Activated CD4-positive, alpha-beta memory T cell treated with anti-CD3 and anti-CD28 coated beads, Interleukin-2, amount 10 ng/mL, durations not matched to agents 7 days and 5 days (primary cell): ENCODE measurements at regions of chr11 and their contacts with region 1.

Region 1: DNA sequence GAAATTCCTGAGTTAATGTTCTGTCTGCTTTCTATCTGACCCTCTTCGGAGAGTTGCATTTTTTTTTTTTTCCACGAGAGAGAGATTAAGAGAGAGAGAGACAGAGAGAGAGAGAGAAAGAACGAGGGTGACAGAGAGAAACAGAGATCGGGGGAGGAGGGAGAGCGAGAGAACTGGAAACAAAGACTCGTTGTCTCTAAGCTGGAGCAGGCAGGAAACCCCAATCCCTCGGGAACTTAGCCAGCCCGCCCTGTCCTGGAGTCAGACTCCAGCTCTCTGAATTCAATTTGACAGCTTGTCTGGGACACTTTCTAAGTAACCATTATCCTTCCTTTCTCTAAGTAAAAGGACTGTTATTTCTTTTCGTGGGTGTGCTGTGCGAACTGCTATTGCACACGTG is 76.9 kb downstream of the KCNJ1 start:
- DNase-seq: no peak
- H3K4me3 Mint-ChIP-seq: no peak overlapping the region
- H3K27ac Mint-ChIP-seq: no peak overlapping the region
- H3K4me1 Mint-ChIP-seq: peaks cover 6% of the 10 kb centered on the region
- H3K27me3 Mint-ChIP-seq: no peaks in the 10 kb centered on the region

Region 2: GRCh38 chr11:128695539-128696221 is 94.5 kb before region 1 on chr11:
- CTCF ChIA-PET with region 1: no interaction called
- POLR2A ChIA-PET with region 1: no interaction called
- DNase-seq: peak; percentile 67
- H3K4me3 Mint-ChIP-seq: peak overlapping the region; percentile 98
- H3K27ac Mint-ChIP-seq: peak overlapping the region; percentile 97
- H3K4me1 Mint-ChIP-seq: peaks cover 58% of the 10 kb centered on the region
- H3K27me3 Mint-ChIP-seq: peaks cover 10% of the 10 kb centered on the region

Region 3: DNA sequence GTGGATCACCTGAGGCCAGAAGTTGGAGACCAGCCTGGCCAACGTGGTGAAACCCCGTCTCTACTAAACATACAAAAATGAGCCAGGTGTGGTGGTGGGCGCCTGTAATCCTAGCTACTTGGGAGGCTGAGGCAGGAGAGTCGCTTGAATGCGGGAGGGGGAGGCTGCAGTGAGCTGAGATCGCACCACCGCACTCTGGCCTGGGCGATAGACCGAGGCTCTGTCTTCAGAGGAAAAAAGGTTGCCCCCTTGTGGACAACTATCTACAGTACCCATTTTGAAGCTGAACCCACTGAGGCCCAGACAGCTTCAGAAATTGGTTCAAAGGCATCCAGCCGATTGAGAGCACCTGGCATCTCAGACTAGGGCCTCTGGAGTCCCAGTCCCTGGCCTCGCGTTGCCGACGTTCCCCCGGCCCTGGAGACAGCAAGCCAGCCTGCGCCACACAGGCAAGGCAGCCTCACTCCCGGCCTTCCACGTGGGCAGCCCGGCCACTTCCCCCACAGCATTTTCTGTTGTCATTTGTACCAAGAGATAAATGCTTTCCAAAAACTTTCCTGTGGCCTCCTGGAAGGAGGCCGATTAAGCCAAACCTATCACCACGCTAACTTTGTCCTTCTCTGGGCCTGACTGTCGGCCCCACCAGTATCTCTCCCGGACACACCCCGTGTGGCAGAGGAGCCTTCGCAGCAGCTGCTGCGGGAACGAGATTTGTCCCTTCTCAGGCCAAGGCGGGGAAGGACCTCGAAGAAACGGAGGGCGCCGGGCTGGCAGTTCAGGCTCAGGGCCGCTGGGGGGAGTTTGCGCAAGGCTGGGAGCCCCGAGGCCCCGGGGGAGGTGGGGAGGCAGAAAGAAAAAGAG is 13.5 kb before region 1 on chr11:
- CTCF ChIA-PET with region 1: interaction called, 11 read pairs
- POLR2A ChIA-PET with region 1: no interaction called
- DNase-seq: peak; percentile 32
- H3K4me3 Mint-ChIP-seq: no peak overlapping the region
- H3K27ac Mint-ChIP-seq: peak overlapping the region; percentile 30
- H3K4me1 Mint-ChIP-seq: peaks cover 54% of the 10 kb centered on the region
- H3K27me3 Mint-ChIP-seq: no peaks in the 10 kb centered on the region